GM13976 (cell line): ENCODE measurements at regions of chrX and their contacts with region 1.

Region 1: GRCh38 chrX:40169193-40170101 is 71.7 kb upstream of the BCOR start:
- DNase-seq: peak; percentile 70
- CTCF ChIP-seq: peak; percentile 47

Region 2: GRCh38 chrX:40013266-40014195 is 155.9 kb before region 1 on chrX:
- in situ Hi-C with region 1: loop called (anchors 10 kb)
- DNase-seq: peak; percentile 34
- CTCF ChIP-seq: no peak

Region 3: DNA sequence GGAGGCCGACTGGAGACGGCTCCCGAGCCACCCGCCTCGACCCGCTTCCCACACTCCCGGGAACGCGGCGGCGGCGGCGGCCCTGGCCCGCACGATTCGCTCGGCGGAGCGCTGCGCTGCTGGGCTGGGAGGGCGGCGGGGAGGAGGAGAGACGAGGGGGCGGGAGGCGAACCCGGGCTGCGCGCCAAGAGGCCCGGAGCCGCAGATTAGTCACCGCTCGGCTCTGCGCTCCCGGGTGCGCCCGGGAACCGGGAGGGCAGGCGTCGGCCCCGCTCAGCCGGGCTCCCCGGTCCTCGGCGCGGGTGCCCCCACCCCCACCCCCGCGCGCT is 60.5 kb before region 1 on chrX:
- in situ Hi-C with region 1: loop called (anchors 10 kb)
- DNase-seq: peak; percentile 72
- CTCF ChIP-seq: no peak